Colonic mucosa (tissue), 4 donors: ENCODE measurements at regions of chr16 and their contacts with region 1.

Region 1: GRCh38 chr16:69930117-69930776 is 20.9 kb upstream of the CLEC18A start:
- DNase-seq: peak; percentile 61
- H3K4me3 ChIP-seq: no peak overlapping the region
- H3K27ac ChIP-seq: no peak overlapping the region
- H3K4me1 ChIP-seq: no peaks in the 10 kb centered on the region
- H3K27me3 ChIP-seq: no peaks in the 10 kb centered on the region
- CTCF ChIP-seq: peak; percentile 62

Region 2: DNA sequence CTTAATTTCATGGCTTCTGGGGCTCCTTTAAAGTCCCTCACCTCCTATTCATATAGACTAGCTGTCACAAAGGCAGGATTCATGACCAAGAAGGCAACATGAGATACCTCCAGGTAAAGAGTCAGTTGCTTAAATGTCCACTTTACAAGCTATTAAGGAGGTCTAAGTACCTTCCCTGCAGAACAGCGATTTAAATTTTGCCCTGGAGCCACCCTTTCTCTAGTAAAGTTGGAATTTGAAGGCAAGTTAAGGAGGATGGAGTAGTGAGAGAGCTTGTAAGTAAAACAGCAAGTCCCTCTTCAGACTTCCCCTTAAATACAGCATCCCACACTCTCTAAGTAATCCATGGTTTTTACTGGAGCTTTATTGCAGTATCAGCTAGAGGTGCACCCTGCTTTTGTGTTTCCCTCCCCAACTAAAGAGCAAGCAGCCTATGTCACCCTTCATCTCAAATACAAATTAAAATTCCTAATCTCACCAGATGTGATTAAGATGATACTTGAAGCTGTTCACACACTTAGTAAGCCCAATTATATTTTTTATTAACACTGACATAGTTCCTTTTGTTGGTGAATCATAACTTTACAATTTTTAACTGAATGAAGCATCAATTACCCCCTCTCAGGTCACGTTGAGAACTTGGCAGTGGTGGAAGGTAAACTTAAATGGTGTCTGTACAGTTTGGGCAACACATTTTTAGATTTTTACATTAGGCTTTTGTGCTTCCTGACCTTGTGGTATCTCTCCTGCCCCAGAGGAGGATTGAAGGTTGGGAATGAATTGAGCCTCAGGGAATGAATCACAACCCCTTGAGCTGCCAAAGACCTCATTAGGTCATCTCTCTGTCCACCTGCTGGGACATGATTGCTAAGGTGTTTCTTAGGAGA is 978.0 kb before region 1 on chr16:
- intact Hi-C with region 1: no loop called
- DNase-seq: no peak
- H3K4me3 ChIP-seq: no peak overlapping the region
- H3K27ac ChIP-seq: no peak overlapping the region
- H3K4me1 ChIP-seq: no peaks in the 10 kb centered on the region
- H3K27me3 ChIP-seq: no peaks in the 10 kb centered on the region
- CTCF ChIP-seq: no peak

Region 3: GRCh38 chr16:69796351-69797118 is 133.7 kb before region 1 on chr16:
- intact Hi-C with region 1: loop called (anchors 2 kb)
- DNase-seq: peak; percentile 47
- H3K4me3 ChIP-seq: no peak overlapping the region
- H3K27ac ChIP-seq: no peak overlapping the region
- H3K4me1 ChIP-seq: no peaks in the 10 kb centered on the region
- H3K27me3 ChIP-seq: no peaks in the 10 kb centered on the region
- CTCF ChIP-seq: peak; percentile 86